Naive thymus-derived CD4-positive, alpha-beta T cell (primary cell): ENCODE measurements at regions of chr14 and their contacts with region 1.

Region 1: GRCh38 chr14:77320238-77320935 is at the start of gene POMT2:
- DNase-seq: peak; percentile 87 to 94 (median 91)
- ATAC-seq: peak; percentile 71
- H3K4me3 ChIP-seq: peak within 1 kb of the TSS; percentile 97
- H3K4me3 Mint-ChIP-seq: peak within 1 kb of the TSS; percentile 94 to 99 (median 98)
- H3K27ac ChIP-seq: peak within 1 kb of the TSS; percentile 93
- H3K27ac Mint-ChIP-seq: peak within 1 kb of the TSS; percentile 95 to 99 (median 99)
- H3K4me1 ChIP-seq: peaks cover 0 to 6% of the 10 kb centered on the region in 2 donors
- H3K4me1 Mint-ChIP-seq: peaks cover 12 to 21% (median 16%) of the 10 kb centered on the region in 7 donors
- H3K27me3 ChIP-seq: no peaks in the 10 kb centered on the region
- H3K27me3 Mint-ChIP-seq: no peaks in the 10 kb centered on the region
- total RNA-seq, gene POMT2: 6.9 to 15.3 (median 9.4) TPM

Region 2: GRCh38 chr14:76050797-76051392 is 1269.5 kb before region 1 on chr14:
- CTCF ChIA-PET with region 1: interaction called, 4 read pairs
- POLR2A ChIA-PET with region 1: no interaction called
- intact Hi-C with region 1: loop called in 1 of 2 experiments (anchors 2 kb)
- DNase-seq: peak in 8 of 9 donors; percentile 15 to 61 (median 45)
- ATAC-seq: peak; percentile 61
- H3K4me3 ChIP-seq: no peak overlapping the region
- H3K4me3 Mint-ChIP-seq: no peak overlapping the region
- H3K27ac ChIP-seq: no peak overlapping the region
- H3K27ac Mint-ChIP-seq: no peak overlapping the region
- H3K4me1 ChIP-seq: no peaks in the 10 kb centered on the region
- H3K4me1 Mint-ChIP-seq: no peaks in the 10 kb centered on the region
- H3K27me3 ChIP-seq: no peaks in the 10 kb centered on the region
- H3K27me3 Mint-ChIP-seq: no peaks in the 10 kb centered on the region

Region 3: DNA sequence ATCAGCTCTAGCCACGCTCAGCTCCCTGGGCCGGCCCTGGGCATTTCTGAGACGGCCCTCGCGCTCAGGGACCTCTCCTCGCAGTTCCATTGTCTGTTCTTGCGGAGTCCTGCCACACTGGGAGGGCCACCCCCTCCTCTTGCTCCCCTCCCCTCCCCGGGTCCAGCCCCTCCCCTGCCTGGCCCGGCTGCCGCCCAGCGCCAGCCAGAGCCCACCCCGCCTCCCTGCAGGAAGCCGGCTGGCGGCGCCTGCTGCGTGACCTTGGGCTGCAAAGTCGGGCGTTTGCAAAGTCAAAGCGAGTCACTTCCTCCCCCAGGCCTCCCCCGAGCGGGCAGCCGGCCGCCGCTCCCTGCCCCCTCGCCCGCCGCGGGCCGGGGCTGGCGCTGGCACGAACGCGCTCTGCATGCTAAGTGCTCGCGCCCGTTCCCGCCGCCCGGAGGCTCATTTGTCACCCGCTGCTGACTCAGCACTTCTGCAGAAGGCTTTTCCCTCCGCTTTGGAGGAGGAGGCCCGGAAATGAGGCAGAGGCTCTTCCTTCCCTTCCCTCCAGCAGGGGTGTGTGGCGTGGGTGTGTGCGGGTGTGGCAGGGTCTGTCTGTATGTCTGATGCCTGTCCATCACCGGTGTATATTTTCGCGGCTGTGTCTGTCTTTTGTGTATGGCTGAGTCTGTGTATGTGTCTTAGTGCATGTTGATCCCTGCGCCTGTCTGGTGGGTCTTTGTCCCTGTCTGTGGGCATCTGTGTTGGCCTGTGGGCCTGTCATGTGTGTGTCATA is 363.9 kb before region 1 on chr14:
- CTCF ChIA-PET with region 1: no interaction called
- POLR2A ChIA-PET with region 1: no interaction called
- intact Hi-C with region 1: loop called in 1 of 2 experiments (anchors 2 kb)
- DNase-seq: peak; percentile 70 to 90 (median 78)
- ATAC-seq: peak; percentile 82
- H3K4me3 ChIP-seq: peak overlapping the region; percentile 74
- H3K4me3 Mint-ChIP-seq: peak overlapping the region; percentile 82 to 97 (median 93)
- H3K27ac ChIP-seq: peak overlapping the region; percentile 87
- H3K27ac Mint-ChIP-seq: peak overlapping the region; percentile 88 to 99 (median 98)
- H3K4me1 ChIP-seq: peaks cover 38 to 49% of the 10 kb centered on the region in 2 donors
- H3K4me1 Mint-ChIP-seq: peaks cover 24 to 77% (median 71%) of the 10 kb centered on the region in 7 donors
- H3K27me3 ChIP-seq: no peaks in the 10 kb centered on the region
- H3K27me3 Mint-ChIP-seq: no peaks in the 10 kb centered on the region

Region 4: DNA sequence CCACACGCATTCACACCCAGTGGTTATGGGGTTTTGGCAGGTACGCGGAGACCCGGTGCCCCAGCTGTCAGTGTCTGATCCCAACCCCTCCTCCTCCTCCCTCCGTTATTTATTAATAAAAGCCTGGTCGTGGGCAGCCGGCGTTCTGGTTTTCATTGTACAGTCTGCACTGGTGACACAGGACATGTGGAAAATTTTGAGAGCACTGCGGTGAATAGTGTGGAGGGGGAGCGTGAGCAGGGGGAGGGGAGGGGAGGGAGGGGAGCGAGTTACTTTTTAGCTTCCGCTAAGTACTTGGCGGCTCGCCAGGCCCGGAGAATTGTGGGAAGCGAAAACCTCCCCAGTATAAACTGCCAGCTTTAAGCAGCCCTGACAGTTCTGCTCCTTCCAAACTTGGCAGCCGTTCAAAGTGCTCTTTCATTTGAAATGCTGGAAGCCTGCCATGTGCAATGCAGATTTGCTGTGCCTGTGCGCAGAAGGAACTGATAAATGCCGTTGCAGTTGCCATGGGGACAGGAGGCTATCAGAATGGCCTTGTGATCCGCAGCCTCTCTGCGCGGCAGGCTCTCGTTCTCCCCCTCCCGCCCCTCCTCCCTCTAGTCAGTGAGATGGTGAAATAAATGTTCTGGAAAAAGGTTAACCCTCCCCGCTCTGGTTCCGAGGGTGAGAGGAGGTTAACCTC is 280.2 kb before region 1 on chr14:
- CTCF ChIA-PET with region 1: interaction called, 3 read pairs
- POLR2A ChIA-PET with region 1: interaction called, 4 read pairs
- intact Hi-C with region 1: loop called (anchors 1 to 5 kb)
- DNase-seq: peak; percentile 86 to 99 (median 99)
- ATAC-seq: peak; percentile 87
- H3K4me3 ChIP-seq: peak overlapping the region; percentile 78
- H3K4me3 Mint-ChIP-seq: peak overlapping the region; percentile 76 to 97 (median 87)
- H3K27ac ChIP-seq: peak overlapping the region; percentile 97
- H3K27ac Mint-ChIP-seq: peak overlapping the region; percentile 97 to 100 (median 99)
- H3K4me1 ChIP-seq: peaks cover 57 to 77% of the 10 kb centered on the region in 2 donors
- H3K4me1 Mint-ChIP-seq: peaks cover 50 to 97% (median 89%) of the 10 kb centered on the region in 7 donors
- H3K27me3 ChIP-seq: no peaks in the 10 kb centered on the region
- H3K27me3 Mint-ChIP-seq: no peaks in the 10 kb centered on the region

Region 5: DNA sequence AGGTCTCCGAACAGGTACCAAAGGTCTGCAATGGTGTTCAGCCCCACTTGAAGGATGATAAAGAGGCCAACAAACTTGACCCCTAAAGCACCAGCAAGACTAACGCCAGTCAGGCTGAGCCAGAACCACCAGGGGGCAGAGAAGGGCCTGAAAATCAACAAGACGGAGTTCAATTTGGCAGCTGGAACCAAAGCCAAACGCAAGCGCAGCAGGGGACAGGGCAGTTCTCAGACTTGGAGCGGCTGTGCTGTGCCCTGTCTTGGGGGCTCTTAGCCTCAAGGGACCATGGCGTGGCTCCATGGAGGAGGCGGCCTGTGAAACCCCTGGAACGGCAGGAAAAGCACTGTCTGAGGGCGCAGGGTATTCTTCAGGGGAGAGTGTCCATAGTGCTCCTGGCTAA is 19.3 kb before region 1 on chr14:
- CTCF ChIA-PET with region 1: interaction called, 11 read pairs
- POLR2A ChIA-PET with region 1: no interaction called
- intact Hi-C with region 1: loop called (anchors 1 kb)
- DNase-seq: peak in 8 of 9 donors; percentile 23 to 64 (median 40)
- ATAC-seq: peak; percentile 62
- H3K4me3 ChIP-seq: no peak overlapping the region
- H3K4me3 Mint-ChIP-seq: no peak overlapping the region
- H3K27ac ChIP-seq: no peak overlapping the region
- H3K27ac Mint-ChIP-seq: no peak overlapping the region
- H3K4me1 ChIP-seq: no peaks in the 10 kb centered on the region
- H3K4me1 Mint-ChIP-seq: peaks cover 0 to 15% (median 0%) of the 10 kb centered on the region in 7 donors
- H3K27me3 ChIP-seq: no peaks in the 10 kb centered on the region
- H3K27me3 Mint-ChIP-seq: no peaks in the 10 kb centered on the region

Region 6: GRCh38 chr14:77554207-77554606 is 233.8 kb after region 1 on chr14:
- CTCF ChIA-PET with region 1: no interaction called
- POLR2A ChIA-PET with region 1: no interaction called
- intact Hi-C with region 1: loop called in 1 of 2 experiments (anchors 1 kb)
- DNase-seq: no peak
- ATAC-seq: peak; percentile 40
- H3K4me3 ChIP-seq: no peak overlapping the region
- H3K4me3 Mint-ChIP-seq: peak overlapping the region in 1 of 10 donors; percentile 77
- H3K27ac ChIP-seq: no peak overlapping the region
- H3K27ac Mint-ChIP-seq: peak overlapping the region in 4 of 9 donors; percentile 2 to 89 (median 26)
- H3K4me1 ChIP-seq: no peaks in the 10 kb centered on the region
- H3K4me1 Mint-ChIP-seq: peaks cover 0 to 27% (median 6%) of the 10 kb centered on the region in 7 donors
- H3K27me3 ChIP-seq: no peaks in the 10 kb centered on the region
- H3K27me3 Mint-ChIP-seq: no peaks in the 10 kb centered on the region

Region 7: GRCh38 chr14:77760381-77761246 is 440.2 kb after region 1 on chr14 and contains the start of gene SNW1:
- CTCF ChIA-PET with region 1: no interaction called
- POLR2A ChIA-PET with region 1: no interaction called
- intact Hi-C with region 1: loop called (anchors 1 kb)
- DNase-seq: peak; percentile 80 to 94 (median 90)
- ATAC-seq: peak; percentile 95
- H3K4me3 ChIP-seq: peak within 1 kb of the TSS; percentile 94
- H3K4me3 Mint-ChIP-seq: peak within 1 kb of the TSS; percentile 91 to 97 (median 95)
- H3K27ac ChIP-seq: peak within 1 kb of the TSS; percentile 97
- H3K27ac Mint-ChIP-seq: peak within 1 kb of the TSS; percentile 92 to 99 (median 98)
- H3K4me1 ChIP-seq: peaks cover 28 to 30% of the 10 kb centered on the region in 2 donors
- H3K4me1 Mint-ChIP-seq: peaks cover 26 to 60% (median 42%) of the 10 kb centered on the region in 7 donors
- H3K27me3 ChIP-seq: no peaks in the 10 kb centered on the region
- H3K27me3 Mint-ChIP-seq: no peaks in the 10 kb centered on the region
- total RNA-seq, gene SNW1: 84.4 to 108 (median 97.7) TPM